SK-N-SH (cell line): ENCODE measurements at regions of chr2 and their contacts with region 1.

Region 1: DNA sequence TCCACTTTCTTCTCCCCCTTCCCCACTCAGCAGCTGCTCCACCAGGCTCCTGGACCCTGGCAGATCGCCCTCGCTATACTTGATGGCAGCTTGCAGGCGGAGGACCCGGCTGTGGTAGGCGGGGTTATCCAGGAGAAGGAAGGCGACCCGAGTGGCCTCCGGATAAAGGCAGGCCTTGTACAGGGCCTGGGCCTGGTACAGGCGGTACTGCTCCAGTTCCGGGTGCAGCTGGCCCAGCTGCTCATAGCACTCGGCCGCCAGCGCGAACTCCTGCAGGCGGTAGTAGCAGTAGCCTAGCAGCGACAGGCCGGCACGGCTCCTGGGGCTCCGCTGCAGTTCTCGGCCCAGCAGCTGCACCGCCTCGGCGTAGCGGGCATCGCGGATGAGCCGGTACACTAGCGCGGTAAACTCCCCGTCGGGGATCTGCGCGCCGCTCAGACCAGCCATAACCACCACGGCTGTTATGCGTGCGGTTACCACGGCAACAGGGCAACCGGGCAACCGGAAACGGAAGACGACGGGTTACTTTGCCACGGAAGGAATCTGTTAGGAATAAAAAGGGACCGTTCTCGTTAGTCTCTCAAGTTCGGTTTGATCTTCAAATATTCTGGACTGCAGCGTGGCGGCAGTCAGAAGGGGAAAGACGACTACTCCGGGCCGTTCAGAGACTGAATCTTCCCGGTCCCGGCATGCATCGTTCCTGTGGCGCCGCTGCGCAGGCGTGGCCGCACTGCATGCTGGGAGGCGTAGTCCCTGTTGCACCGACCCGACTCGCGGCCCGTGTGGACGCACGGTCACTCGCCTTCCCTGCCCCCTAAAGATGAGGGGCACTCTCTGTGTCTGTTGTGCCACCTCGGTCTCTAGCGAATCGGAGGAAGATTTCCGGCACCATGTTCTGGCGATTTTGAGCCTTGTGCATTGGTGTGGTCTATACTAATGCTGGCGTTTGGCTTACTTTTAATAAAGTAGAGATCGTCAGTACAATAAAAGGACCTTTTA is 226.0 kb downstream of the AGPS start:
- DNase-seq: peak; percentile 92
- H3K4me3 ChIP-seq: peak overlapping the region; percentile 64 to 92
- H3K27ac ChIP-seq: peak overlapping the region; percentile 83 to 99
- H3K4me1 ChIP-seq: peaks cover 0 to 10% of the 10 kb centered on the region in 2 experiments; a peak in 2 of 4 replicates
- H3K27me3 ChIP-seq: no peaks in the 10 kb centered on the region
- CTCF ChIP-seq: no peak
- EP300 ChIP-seq: 0 out of 4 replicates have a peak, but pooled peaks of 1 of the 2 experiments have one; percentile 4
- RAD21 ChIP-seq: no peak

Region 2: DNA sequence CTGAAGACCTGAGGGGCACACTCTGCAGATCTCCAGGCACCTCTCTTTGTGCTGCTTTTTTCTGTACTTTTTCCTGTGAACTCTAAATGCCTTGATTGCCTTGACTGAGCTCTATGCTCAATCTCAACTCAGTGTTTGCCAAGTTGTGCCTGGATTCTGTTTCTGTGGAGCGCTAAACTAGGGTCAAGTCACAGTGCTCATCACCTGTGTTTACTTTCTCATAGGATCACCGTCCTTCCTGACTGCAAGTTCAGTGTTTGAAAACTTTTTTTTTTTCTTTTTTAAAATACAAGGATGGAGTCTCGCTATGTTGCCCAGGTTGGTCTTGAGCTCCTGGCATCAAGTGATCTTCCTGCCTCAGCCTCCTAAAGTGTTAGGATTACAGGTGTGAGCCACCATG is 163.4 kb before region 1 on chr2:
- CTCF ChIA-PET with region 1: no interaction called
- POLR2A ChIA-PET with region 1: no interaction called
- DNase-seq: no peak
- H3K4me3 ChIP-seq: no peak overlapping the region
- H3K27ac ChIP-seq: no peak overlapping the region
- H3K4me1 ChIP-seq: no peaks in the 10 kb centered on the region
- H3K27me3 ChIP-seq: no peaks in the 10 kb centered on the region
- CTCF ChIP-seq: no peak
- EP300 ChIP-seq: no peak
- RAD21 ChIP-seq: no peak

Region 3: GRCh38 chr2:177604271-177605065 is 14.1 kb before region 1 on chr2:
- CTCF ChIA-PET with region 1: interaction called, 15 read pairs
- POLR2A ChIA-PET with region 1: no interaction called
- DNase-seq: peak; percentile 50
- H3K4me3 ChIP-seq: no peak overlapping the region; a peak in 1 of 4 replicates
- H3K27ac ChIP-seq: no peak overlapping the region; a peak in 1 of 4 replicates
- H3K4me1 ChIP-seq: peaks cover 2 to 9% of the 10 kb centered on the region in 2 experiments; a peak in 2 of 4 replicates
- H3K27me3 ChIP-seq: no peaks in the 10 kb centered on the region; the same call in 1 of the 2 replicates
- CTCF ChIP-seq: peak; percentile 72
- EP300 ChIP-seq: no peak
- RAD21 ChIP-seq: peak; percentile 79